Posterior cingulate gyrus (tissue), 11 donors: ENCODE measurements at regions of chr17 and their contacts with region 1.

Region 1: DNA sequence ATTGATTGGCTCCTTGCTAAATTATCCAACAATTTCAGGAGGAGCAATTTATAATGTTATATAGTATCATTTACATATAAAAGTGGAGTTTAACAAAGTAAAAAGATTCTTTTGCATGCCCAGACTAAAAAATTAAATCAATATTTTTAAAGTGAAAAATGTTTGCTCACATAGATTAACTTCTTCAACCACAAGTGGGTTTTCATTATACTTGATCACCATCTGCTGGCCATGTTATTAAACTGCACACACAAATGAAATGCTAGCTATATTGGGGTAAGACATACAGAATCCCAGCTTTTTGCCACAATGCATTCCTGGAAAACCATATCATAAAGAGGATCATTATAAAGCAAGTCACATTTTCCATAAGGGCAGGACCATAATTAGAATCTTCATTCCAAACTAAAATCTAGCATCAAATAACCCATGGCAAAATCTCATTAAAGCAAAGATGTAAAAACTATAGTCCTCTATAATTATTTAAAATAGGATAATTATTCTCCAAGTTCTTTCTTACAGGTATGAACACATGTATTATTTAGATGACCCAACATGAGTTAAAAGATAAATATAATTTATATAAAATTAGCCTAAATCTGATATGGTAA is 26.3 kb downstream of the CEP112 start:
- DNase-seq: no peak

Region 2: GRCh38 chr17:65231662-65232335 is 933.8 kb before region 1 on chr17:
- intact Hi-C with region 1: loop called (anchors 1 kb)
- DNase-seq: peak in 6 of 10 donors; percentile 20 to 89 (median 42)

Region 3: DNA sequence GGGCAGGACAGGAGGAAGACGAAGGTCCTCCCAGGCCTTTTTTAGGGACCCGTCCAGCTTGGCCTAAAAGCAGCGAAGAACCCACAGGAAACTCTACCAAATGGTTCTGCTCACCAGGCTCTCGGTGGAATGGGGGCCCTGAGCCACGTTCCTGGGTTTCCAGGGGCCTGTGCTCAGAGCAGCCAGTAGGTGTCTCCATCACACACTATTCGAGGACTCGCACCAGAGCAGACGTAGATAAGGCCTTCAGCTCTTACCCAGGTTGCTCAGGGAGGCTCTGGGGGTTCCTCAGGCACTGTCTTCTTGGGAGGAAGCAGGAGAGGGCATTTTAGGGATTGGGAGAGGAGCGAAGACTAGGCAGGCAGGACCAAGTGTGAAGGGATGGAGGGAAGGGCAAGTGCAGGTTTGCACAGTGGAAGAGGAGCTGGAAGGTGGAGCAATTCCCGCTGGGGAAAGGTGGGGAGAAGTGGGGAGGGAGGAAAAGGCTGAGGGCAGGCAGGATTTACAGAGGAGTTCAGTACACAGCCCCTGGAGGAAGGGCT is 871.4 kb before region 1 on chr17:
- intact Hi-C with region 1: loop called (anchors 1 kb)
- DNase-seq: peak; percentile 35 to 95 (median 63)

Region 4: DNA sequence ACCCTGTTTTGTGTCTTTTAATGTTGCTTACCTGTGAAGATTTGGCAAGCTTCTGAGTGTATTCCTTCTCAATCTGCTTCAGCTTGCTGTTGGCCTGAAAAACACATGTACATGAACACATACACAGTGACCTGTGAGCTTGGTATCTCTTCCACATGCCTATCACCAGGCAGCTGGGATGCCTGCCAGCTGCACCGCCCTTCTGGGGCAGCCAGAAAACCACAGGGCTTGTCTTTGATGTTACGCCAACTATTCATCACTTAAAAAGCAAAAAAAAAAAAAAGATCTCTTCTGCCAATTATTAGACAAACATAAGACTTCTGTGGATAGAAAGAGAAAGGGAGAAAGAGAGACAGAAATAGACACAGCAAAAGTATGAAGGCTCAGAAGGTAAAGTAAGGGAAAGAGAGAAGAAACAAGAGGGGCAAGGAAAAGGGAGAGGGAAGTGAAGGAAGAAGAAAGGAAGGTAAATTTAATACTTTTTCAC is 414.9 kb before region 1 on chr17:
- intact Hi-C with region 1: no loop called
- DNase-seq: peak in 1 of 10 donors; percentile 55

Region 5: GRCh38 chr17:66200685-66201092 is 35.1 kb after region 1 on chr17:
- intact Hi-C with region 1: no loop called
- DNase-seq: peak in 4 of 10 donors; percentile 11 to 38 (median 21)